ENCODE measurements at regions of chr3 and their contacts with region 1.

Region 1: DNA sequence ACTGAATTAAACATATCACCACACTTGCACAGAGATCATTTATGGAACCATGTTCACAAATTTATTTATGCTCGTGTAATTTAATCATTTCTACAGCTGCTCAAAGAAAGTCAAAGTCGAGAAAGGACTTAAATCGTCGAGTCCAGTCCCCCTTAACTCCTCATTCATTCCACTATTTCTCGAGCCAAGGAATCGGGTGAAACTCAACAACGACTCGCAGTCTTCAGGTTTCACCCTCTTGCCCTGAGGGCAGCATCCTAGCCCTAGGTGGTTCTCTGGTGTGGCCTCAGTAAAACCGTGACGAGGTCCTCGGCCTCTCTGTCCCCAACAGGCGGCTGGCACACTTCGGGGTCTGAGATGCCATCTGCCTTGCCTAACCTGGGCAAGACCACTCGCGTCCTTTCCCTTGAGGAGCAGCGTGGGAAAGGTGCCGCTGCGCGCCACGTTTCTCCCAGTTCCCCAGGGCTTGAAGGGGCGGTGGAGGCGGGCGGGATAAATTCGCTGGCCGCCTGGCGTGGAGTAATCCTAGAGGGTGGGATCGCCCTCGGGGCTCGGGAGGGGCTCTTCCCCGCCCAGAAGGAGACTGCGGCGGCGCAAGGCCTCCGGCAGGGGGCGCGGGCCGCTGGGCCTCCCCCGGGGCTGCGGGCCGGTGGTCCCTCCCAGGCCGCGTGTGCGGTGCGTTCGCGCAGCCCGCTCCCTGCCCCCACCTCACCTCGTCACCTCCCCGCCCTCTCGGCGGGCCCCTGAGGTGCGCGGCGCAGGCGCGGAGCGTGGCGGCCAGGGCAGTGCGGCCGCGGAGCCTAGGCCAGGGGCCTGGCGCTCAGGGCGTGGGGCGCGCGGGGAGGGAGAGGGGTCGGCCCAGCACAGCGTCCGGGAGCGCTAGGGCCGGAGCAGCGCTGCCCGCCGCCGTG is at the start of gene ZNF639:
- DNase-seq: peak; percentile 68
- H3K4me3 ChIP-seq: peak within 1 kb of the TSS; percentile 82
- H3K27ac ChIP-seq: peak within 1 kb of the TSS; percentile 86
- H3K27me3 ChIP-seq: no peaks in the 10 kb centered on the region
- CTCF ChIP-seq: peak; percentile 65
- polyA plus RNA-seq, gene ZNF639: 17.6 and 21.3 TPM in 2 replicates

Region 2: GRCh38 chr3:178436773-178437172 is 885.8 kb before region 1 on chr3:
- CTCF ChIA-PET with region 1: interaction called, 10 read pairs
- POLR2A ChIA-PET with region 1: no interaction called
- DNase-seq: no peak
- H3K4me3 ChIP-seq: no peak overlapping the region
- H3K27ac ChIP-seq: no peak overlapping the region
- H3K27me3 ChIP-seq: no peaks in the 10 kb centered on the region
- CTCF ChIP-seq: peak; percentile 67

Region 3: GRCh38 chr3:179027326-179027900 is 295.1 kb before region 1 on chr3:
- CTCF ChIA-PET with region 1: interaction called, 34 read pairs
- POLR2A ChIA-PET with region 1: no interaction called
- DNase-seq: no peak
- H3K4me3 ChIP-seq: no peak overlapping the region
- H3K27ac ChIP-seq: no peak overlapping the region
- H3K27me3 ChIP-seq: no peaks in the 10 kb centered on the region
- CTCF ChIP-seq: 0 out of 2 replicates have a peak, but pooled peaks have one; percentile 5

Region 4: DNA sequence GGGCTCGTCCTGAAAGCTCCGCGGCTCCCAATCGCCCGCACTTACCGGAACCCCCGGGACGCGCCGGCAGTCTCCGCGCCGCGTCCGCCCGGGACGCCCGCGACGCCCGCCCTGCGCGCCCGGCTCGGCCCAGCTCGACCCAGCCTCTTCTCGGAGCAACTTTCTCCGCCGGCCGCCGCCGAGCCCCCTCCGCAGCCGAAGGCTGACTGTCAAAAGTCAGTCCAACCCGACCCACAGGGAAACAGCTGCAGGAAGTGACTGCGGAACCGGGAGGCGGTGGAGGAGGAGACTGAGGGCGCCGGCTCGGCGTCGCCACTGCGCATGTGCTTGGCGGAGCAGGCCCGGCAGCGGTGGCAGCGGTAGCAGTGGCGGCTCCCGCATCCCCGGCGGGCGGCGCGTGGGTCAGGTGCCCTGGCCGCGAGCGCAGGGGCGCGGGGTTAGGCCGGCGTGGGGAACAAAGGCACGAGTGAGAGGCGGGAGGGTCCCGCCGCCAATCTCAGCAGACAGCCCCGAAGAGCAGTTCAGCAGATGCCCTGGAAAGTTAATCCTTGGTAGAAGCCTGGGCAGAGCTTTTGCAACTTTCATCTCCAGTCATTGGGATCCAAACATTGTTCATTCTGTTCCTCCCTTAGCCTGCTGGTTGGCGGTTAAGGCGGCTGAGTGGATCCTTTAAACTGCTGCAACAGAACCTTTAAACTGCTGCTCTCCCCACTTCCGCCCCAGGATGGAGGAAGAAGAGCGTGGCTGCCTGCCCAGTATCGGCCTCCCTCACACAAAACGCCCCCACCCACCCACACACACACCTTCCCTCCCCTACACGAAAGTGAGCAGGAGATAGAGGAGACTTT is 250.8 kb before region 1 on chr3 and contains the start of gene ZMAT3:
- CTCF ChIA-PET with region 1: interaction called, 51 read pairs
- POLR2A ChIA-PET with region 1: no interaction called
- DNase-seq: peak; percentile 54
- H3K4me3 ChIP-seq: peak within 1 kb of the TSS; percentile 90
- H3K27ac ChIP-seq: peak within 1 kb of the TSS; percentile 84
- H3K27me3 ChIP-seq: no peaks in the 10 kb centered on the region
- CTCF ChIP-seq: no peak
- polyA plus RNA-seq, gene ZMAT3: 46.2 and 51.9 TPM in 2 replicates

Region 5: GRCh38 chr3:179108086-179108485 is 214.5 kb before region 1 on chr3:
- CTCF ChIA-PET with region 1: interaction called, 42 read pairs
- POLR2A ChIA-PET with region 1: no interaction called
- DNase-seq: peak; percentile 30
- H3K4me3 ChIP-seq: no peak overlapping the region
- H3K27ac ChIP-seq: no peak overlapping the region
- H3K27me3 ChIP-seq: no peaks in the 10 kb centered on the region
- CTCF ChIP-seq: no peak

Region 6: DNA sequence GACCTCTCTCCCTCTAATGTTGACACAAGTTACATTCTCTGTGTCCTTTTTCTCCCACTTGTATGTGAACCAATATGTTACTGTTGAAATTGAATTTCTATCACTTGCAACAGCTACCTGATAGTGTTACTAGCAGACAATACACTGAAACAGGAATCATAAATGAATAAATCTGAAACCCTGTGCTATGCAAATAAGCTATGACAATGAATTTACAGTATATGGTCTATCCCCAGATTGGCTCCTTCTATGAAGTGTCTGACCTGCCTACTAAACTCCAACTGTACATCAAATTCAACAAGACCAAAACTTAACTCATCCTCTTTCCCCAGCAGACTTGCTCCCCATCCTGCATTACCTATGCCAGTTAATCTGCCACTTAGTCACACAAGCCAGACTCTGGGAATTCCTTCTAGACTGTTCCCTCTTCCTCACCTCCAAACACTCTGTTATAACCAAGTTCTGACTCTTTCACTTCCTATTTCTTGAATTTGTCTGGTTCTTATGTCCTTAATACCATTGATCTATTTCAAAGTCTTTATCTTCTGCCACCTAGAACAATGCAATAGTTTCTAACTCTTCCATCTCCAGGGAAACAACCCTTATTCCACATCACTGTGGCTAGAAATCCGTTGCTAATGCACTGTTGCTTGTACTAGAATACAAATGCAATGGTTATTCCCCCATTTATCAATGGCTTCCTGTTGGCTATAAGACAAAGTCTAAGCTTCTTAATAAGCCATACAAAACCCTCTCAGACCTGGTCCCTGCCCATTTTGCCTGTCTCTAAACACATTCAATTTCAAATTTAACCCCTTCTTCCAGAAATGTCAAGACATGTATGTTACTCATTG is 13.1 kb before region 1 on chr3:
- CTCF ChIA-PET with region 1: interaction called, 12 read pairs
- POLR2A ChIA-PET with region 1: no interaction called
- DNase-seq: no peak
- H3K4me3 ChIP-seq: no peak overlapping the region
- H3K27ac ChIP-seq: no peak overlapping the region
- H3K27me3 ChIP-seq: no peaks in the 10 kb centered on the region
- CTCF ChIP-seq: no peak

Measured in AG04450 (cell line).